ENCODE measurements at regions of chr2 and their contacts with region 1.

Region 1: GRCh38 chr2:199850718-199851500 is at the start of gene FTCDNL1:
- DNase-seq: peak; percentile 59
- ATAC-seq: peak; percentile 91
- H3K4me3 Mint-ChIP-seq: peak within 1 kb of the TSS; percentile 95
- H3K27ac Mint-ChIP-seq: peak within 1 kb of the TSS; percentile 89
- H3K4me1 Mint-ChIP-seq: peaks cover 11% of the 10 kb centered on the region
- H3K27me3 Mint-ChIP-seq: no peaks in the 10 kb centered on the region
- CTCF ChIP-seq: no peak
- total RNA-seq, gene FTCDNL1: 1.4 and 1.5 TPM in 2 replicates

Region 2: GRCh38 chr2:199459286-199460016 is 391.5 kb before region 1 on chr2:
- CTCF ChIA-PET with region 1: no interaction called
- POLR2A ChIA-PET with region 1: no interaction called
- intact Hi-C with region 1: loop called (anchors 10 kb)
- DNase-seq: peak; percentile 66
- ATAC-seq: peak; percentile 51
- H3K4me3 Mint-ChIP-seq: peak overlapping the region; percentile 93
- H3K27ac Mint-ChIP-seq: peak overlapping the region; percentile 73
- H3K4me1 Mint-ChIP-seq: peaks cover 33% of the 10 kb centered on the region
- H3K27me3 Mint-ChIP-seq: peaks cover 41% of the 10 kb centered on the region
- CTCF ChIP-seq: no peak

Region 3: GRCh38 chr2:199704358-199705238 is 146.3 kb before region 1 on chr2:
- CTCF ChIA-PET with region 1: no interaction called
- POLR2A ChIA-PET with region 1: no interaction called
- intact Hi-C with region 1: no loop called
- DNase-seq: no peak
- ATAC-seq: peak; percentile 47
- H3K4me3 Mint-ChIP-seq: no peak overlapping the region
- H3K27ac Mint-ChIP-seq: no peak overlapping the region
- H3K4me1 Mint-ChIP-seq: no peaks in the 10 kb centered on the region
- H3K27me3 Mint-ChIP-seq: peaks cover 2% of the 10 kb centered on the region
- CTCF ChIP-seq: no peak

Region 4: GRCh38 chr2:199833525-199833924 is 17.4 kb before region 1 on chr2:
- CTCF ChIA-PET with region 1: no interaction called
- POLR2A ChIA-PET with region 1: no interaction called
- intact Hi-C with region 1: no loop called
- DNase-seq: no peak
- ATAC-seq: no peak
- H3K4me3 Mint-ChIP-seq: no peak overlapping the region
- H3K27ac Mint-ChIP-seq: no peak overlapping the region
- H3K4me1 Mint-ChIP-seq: no peaks in the 10 kb centered on the region
- H3K27me3 Mint-ChIP-seq: no peaks in the 10 kb centered on the region
- CTCF ChIP-seq: no peak

Region 5: GRCh38 chr2:199861132-199861774 is 10.3 kb after region 1 on chr2:
- CTCF ChIA-PET with region 1: interaction called, 4 read pairs
- POLR2A ChIA-PET with region 1: no interaction called
- intact Hi-C with region 1: loop called (anchors 1 kb)
- DNase-seq: no peak
- ATAC-seq: no peak
- H3K4me3 Mint-ChIP-seq: no peak overlapping the region
- H3K27ac Mint-ChIP-seq: no peak overlapping the region
- H3K4me1 Mint-ChIP-seq: no peaks in the 10 kb centered on the region
- H3K27me3 Mint-ChIP-seq: peaks cover 14% of the 10 kb centered on the region
- CTCF ChIP-seq: peak; percentile 80

Region 6: DNA sequence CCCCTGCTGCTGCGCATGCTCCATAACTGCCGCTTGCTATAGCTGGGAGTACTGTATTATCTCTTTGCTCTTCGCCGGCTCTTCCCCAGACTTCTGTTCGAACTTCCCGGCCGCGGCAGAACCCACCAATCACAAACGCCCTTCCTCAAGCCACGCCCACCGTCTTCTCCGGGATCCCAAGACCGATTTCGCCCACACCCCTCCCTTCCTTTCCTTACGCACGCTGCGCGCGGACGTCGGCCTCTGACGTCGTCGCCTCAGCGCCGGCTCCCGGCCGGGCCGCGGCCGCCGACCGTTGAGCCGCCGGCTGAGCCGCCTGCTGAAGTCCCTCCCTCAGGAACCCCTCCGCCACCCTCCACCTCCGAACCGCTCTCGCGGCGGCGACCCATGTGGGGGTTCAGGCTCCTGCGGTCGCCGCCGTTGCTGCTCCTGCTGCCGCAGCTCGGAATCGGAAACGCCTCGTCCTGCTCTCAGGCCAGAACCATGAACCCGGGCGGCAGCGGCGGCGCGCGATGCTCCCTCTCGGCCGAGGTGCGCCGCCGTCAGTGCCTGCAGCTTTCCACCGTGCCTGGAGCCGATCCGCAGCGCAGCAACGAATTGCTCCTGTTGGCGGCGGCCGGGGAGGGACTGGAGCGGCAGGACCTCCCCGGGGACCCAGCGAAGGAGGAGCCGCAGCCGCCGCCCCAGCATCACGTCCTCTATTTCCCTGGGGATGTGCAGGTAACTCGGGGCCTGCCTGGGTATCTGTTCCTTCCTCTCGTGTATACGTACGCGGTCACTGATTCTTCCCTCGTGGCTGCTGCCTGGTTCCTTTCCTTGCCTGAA is 60.4 kb after region 1 on chr2 and contains the start of gene C2orf69:
- CTCF ChIA-PET with region 1: no interaction called
- POLR2A ChIA-PET with region 1: no interaction called
- intact Hi-C with region 1: loop called (anchors 1 kb)
- DNase-seq: peak; percentile 86
- ATAC-seq: peak; percentile 83
- H3K4me3 Mint-ChIP-seq: peak within 1 kb of the TSS; percentile 94
- H3K27ac Mint-ChIP-seq: peak within 1 kb of the TSS; percentile 94
- H3K4me1 Mint-ChIP-seq: peaks cover 35% of the 10 kb centered on the region
- H3K27me3 Mint-ChIP-seq: no peaks in the 10 kb centered on the region
- CTCF ChIP-seq: no peak
- total RNA-seq, gene C2orf69: 12.1 and 12.6 TPM in 2 replicates

Region 7: DNA sequence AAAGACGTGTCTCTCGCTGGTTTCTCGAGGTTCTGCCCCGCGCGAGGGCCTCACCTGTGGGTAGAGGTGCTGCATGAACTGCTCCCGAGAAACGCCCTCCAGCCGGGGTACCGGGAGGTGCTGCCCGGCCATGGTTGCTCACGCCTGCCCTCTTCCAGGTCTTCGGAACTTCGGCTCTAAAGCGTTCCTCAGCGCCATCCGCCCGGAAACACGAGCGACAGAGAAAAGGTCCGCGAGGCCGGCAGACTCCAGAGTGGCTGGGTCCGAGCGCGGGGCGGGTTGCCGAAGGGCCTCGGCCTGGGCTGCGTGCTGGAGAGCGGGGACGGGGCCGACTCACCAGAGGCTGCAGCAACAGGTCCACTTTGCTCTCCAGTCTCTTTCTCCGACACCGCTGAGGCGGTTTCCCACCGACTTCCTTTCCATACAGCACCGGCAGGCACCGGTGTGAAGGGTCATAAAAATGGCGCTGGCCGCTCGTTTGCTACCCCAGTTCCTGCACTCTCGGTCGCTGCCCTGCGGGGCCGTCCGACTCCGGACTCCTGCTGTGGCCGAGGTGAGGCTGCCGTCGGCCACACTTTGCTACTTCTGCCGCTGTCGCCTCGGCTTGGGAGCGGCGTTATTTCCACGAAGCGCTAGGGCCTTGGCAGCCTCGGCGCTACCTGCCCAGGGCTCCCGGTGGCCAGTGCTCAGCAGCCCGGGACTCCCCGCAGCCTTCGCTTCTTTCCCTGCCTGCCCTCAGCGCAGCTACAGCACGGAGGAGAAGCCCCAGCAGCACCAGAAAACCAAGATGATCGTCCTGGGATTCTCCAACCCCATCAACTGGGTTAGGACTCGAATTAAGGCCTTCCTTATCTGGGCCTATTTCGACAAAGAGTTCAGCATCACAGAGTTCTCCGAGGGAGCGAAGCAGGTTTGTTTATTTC is 104.7 kb after region 1 on chr2 and contains the starts of genes MAIP1 and TYW5:
- CTCF ChIA-PET with region 1: no interaction called
- POLR2A ChIA-PET with region 1: no interaction called
- intact Hi-C with region 1: loop called (anchors 1 kb)
- DNase-seq: peak; percentile 75
- ATAC-seq: peak; percentile 87
- H3K4me3 Mint-ChIP-seq: peak within 1 kb of the TSS; percentile 99
- H3K27ac Mint-ChIP-seq: peak within 1 kb of the TSS; percentile 91
- H3K4me1 Mint-ChIP-seq: peaks cover 48% of the 10 kb centered on the region
- H3K27me3 Mint-ChIP-seq: no peaks in the 10 kb centered on the region
- CTCF ChIP-seq: no peak
- total RNA-seq, gene MAIP1: 20.2 and 20.7 TPM in 2 replicates
- total RNA-seq, gene TYW5: 10.5 and 12.5 TPM in 2 replicates

Region 8: GRCh38 chr2:200454927-200455801 is 604.3 kb after region 1 on chr2:
- CTCF ChIA-PET with region 1: no interaction called
- POLR2A ChIA-PET with region 1: no interaction called
- intact Hi-C with region 1: loop called (anchors 10 kb)
- DNase-seq: no peak
- ATAC-seq: no peak
- H3K4me3 Mint-ChIP-seq: no peak overlapping the region
- H3K27ac Mint-ChIP-seq: peak overlapping the region; percentile 60
- H3K4me1 Mint-ChIP-seq: peaks cover 49% of the 10 kb centered on the region
- H3K27me3 Mint-ChIP-seq: no peaks in the 10 kb centered on the region
- CTCF ChIP-seq: no peak

Region 9: GRCh38 chr2:200509612-200510433 is 658.9 kb after region 1 on chr2 and contains the start of gene KCTD18:
- CTCF ChIA-PET with region 1: no interaction called
- POLR2A ChIA-PET with region 1: no interaction called
- intact Hi-C with region 1: loop called (anchors 5 kb)
- DNase-seq: peak; percentile 93
- ATAC-seq: peak; percentile 99
- H3K4me3 Mint-ChIP-seq: peak within 1 kb of the TSS; percentile 90
- H3K27ac Mint-ChIP-seq: peak within 1 kb of the TSS; percentile 88
- H3K4me1 Mint-ChIP-seq: peaks cover 27% of the 10 kb centered on the region
- H3K27me3 Mint-ChIP-seq: peaks cover 2% of the 10 kb centered on the region
- CTCF ChIP-seq: peak; percentile 62
- total RNA-seq, gene KCTD18: 18.5 and 18.9 TPM in 2 replicates

Measured in activated B cell treated with CpG ODN at 0.5 μM for 24 hours (primary cell).